Mucosa of descending colon (tissue), 3 donors: ENCODE measurements at regions of chr11 and their contacts with region 1.

Region 1: GRCh38 chr11:35932681-35933319 is 11.1 kb upstream of the LDLRAD3 start:
- DNase-seq: no peak
- ATAC-seq: no peak
- H3K4me3 ChIP-seq: no peak overlapping the region
- H3K4me1 ChIP-seq: no peaks in the 10 kb centered on the region
- CTCF ChIP-seq: no peak

Region 2: DNA sequence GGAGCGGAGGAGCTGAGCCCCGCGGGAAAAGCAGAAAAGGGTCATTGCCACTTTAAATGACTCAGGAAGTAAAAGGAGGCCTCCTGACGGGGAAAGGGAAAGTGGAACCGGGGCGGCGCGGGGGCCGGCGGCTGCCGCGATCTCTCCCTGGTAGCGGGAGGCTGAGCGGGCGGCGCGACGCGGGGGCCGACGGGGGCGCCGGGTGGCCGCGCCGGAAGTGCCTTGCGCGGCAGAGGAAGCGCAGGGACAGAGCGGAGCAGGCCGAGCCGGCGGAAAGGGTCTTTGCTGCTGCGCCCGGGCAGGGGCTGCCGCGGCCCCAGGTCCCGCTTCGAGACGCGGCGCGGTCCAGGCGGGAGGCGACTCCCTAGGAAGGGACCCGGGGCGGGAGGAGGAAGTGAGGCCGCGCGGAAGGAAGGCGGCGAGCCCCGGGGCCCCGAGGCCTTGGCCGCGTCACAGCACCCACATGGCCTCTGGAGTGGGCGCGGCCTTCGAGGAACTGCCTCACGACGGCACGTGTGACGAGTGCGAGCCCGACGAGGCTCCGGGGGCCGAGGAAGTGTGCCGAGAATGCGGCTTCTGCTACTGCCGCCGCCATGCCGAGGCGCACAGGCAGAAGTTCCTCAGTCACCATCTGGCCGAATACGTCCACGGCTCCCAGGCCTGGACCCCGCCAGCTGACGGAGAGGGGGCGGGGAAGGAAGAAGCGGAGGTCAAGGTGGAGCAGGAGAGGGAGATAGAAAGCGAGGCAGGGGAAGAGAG is 270.0 kb before region 1 on chr11 and contains the start of gene TRIM44:
- intact Hi-C with region 1: no loop called
- DNase-seq: peak; percentile 87 to 91 (median 89)
- ATAC-seq: peak; percentile 95
- H3K4me3 ChIP-seq: peak within 1 kb of the TSS; percentile 57
- H3K4me1 ChIP-seq: peaks cover 7% of the 10 kb centered on the region
- CTCF ChIP-seq: no peak
- total RNA-seq, gene TRIM44: 43.0 to 83.6 (median 43.9) TPM

Region 3: DNA sequence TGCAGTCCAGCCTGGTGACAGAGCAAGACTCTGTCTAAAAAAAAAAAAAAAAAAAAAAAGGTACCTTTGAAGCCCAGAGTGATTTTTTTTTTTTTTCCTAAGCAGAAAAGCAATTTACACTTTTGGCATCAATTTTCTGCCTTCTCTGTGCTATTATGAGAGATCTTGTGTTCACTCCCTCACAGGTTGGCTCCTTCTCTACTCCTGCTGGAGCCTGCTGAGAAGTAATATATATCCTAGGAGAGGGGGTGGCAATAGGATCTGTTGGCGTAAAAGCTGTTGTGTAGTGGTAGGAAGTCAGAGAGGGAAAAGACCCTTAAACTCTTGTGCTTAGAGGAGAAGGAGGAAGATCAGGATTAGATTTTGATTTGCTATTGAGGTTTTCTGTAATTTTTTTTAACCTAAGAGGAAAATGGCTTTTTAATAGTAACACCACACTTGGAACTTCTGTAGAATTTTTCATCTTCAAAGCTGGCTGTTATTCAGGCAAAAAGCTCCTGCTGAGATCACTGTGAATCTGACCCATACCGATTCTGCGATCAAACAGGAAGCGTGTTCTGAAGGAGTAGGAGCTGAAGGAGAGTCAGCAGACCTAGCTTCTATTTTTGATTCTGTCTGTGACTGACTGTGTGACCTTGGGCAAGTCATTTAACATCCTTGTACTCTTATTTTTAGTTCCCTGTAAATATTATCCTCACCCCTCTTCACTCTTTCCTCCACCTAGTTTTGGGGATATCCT is 192.6 kb before region 1 on chr11:
- intact Hi-C with region 1: loop called in 1 of 2 experiments (anchors 5 kb)
- DNase-seq: no peak
- ATAC-seq: no peak
- H3K4me3 ChIP-seq: no peak overlapping the region
- H3K4me1 ChIP-seq: no peaks in the 10 kb centered on the region
- CTCF ChIP-seq: no peak